ENCODE measurements at regions of chr15 and their contacts with region 1.

Region 1: GRCh38 chr15:90564051-90564450 is 34.3 kb downstream of the CRTC3 start:
- DNase-seq: peak; percentile 33
- CTCF ChIP-seq: no peak

Region 2: GRCh38 chr15:90553248-90553745 is 10.8 kb before region 1 on chr15:
- CTCF ChIA-PET with region 1: interaction called, 11 read pairs
- POLR2A ChIA-PET with region 1: no interaction called
- DNase-seq: no peak
- CTCF ChIP-seq: no peak

Measured in GM10248 (cell line).